Panc1 (cell line): ENCODE measurements at regions of chr17 and their contacts with region 1.

Region 1: GRCh38 chr17:32253117-32253611 is 12.5 kb upstream of the RHBDL3 start:
- DNase-seq: peak; percentile 67
- ATAC-seq: peak; percentile 98
- H3K4me3 ChIP-seq: no peak overlapping the region
- H3K27ac ChIP-seq: no peak overlapping the region
- H3K4me1 ChIP-seq: no peaks in the 10 kb centered on the region
- H3K27me3 ChIP-seq: no peaks in the 10 kb centered on the region
- CTCF ChIP-seq: peak; percentile 99

Region 2: GRCh38 chr17:32185875-32186274 is 67.3 kb before region 1 on chr17:
- CTCF ChIA-PET with region 1: interaction called, 12 read pairs
- POLR2A ChIA-PET with region 1: no interaction called
- in situ Hi-C with region 1: no loop called
- intact Hi-C with region 1: no loop called
- DNase-seq: no peak
- ATAC-seq: no peak
- H3K4me3 ChIP-seq: no peak overlapping the region
- H3K27ac ChIP-seq: no peak overlapping the region
- H3K4me1 ChIP-seq: no peaks in the 10 kb centered on the region
- H3K27me3 ChIP-seq: no peaks in the 10 kb centered on the region
- CTCF ChIP-seq: no peak

Region 3: GRCh38 chr17:32222620-32223019 is 30.5 kb before region 1 on chr17:
- CTCF ChIA-PET with region 1: interaction called, 11 read pairs
- POLR2A ChIA-PET with region 1: no interaction called
- in situ Hi-C with region 1: no loop called
- intact Hi-C with region 1: no loop called
- DNase-seq: no peak
- ATAC-seq: no peak
- H3K4me3 ChIP-seq: no peak overlapping the region
- H3K27ac ChIP-seq: no peak overlapping the region
- H3K4me1 ChIP-seq: no peaks in the 10 kb centered on the region
- H3K27me3 ChIP-seq: no peaks in the 10 kb centered on the region
- CTCF ChIP-seq: no peak

Region 4: GRCh38 chr17:32320847-32321246 is 67.7 kb after region 1 on chr17:
- CTCF ChIA-PET with region 1: interaction called, 6 read pairs
- POLR2A ChIA-PET with region 1: interaction called, 3 read pairs
- in situ Hi-C with region 1: no loop called
- intact Hi-C with region 1: loop called (anchors 1 kb)
- DNase-seq: no peak
- ATAC-seq: no peak
- H3K4me3 ChIP-seq: no peak overlapping the region
- H3K27ac ChIP-seq: no peak overlapping the region
- H3K4me1 ChIP-seq: peaks cover 8% of the 10 kb centered on the region
- H3K27me3 ChIP-seq: no peaks in the 10 kb centered on the region
- CTCF ChIP-seq: no peak